Activated CD4-positive, alpha-beta T cell treated with anti-CD3 and anti-CD28 coated beads for 36 hours (primary cell): ENCODE measurements at regions of chr11 and their contacts with region 1.

Region 1: DNA sequence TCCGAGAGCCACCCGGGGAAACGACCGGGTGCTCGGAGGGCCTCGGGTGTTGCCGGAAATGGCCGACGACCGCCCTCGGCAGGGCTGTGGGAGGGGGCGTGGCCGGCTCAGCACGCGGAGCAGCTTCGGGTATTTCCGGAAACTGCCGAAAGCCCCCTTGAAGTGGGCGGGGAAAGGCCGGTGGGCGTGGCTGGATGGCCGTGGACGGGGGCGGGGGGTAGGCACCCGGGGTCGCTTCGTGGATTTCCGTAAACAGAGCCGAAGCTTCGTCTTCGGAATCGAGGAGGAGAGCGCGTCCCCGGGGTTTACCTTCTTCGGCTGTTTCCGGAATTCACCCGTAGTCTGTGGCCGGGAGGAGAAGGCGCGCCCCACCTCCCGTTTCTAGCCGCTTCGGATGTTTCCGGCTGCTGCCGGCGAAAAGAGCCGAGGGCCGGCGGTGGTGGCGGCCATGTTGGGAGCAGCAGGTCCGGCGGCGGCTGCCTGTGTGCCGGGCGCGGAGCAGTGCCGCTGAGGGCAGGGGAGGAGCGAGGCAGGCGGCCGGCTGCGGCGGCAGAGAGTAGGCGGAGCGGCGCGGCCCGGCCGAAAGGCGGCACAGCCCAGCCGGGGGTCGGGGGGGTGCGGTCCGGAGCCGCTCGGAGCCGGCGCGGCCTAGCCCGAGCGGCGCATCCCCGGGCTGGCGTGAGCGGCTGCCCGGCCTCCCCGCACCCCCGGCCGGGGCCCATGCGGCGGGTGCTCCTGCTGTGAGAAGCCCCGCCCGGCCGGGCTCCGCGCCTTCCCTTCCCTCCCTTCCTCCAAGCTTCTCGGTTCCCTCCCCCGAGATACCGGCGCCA is at the start of gene MARK2:
- DNase-seq: peak; percentile 100
- ATAC-seq: peak; percentile 90
- H3K4me3 Mint-ChIP-seq: peak within 1 kb of the TSS; percentile 97
- H3K27ac Mint-ChIP-seq: peak within 1 kb of the TSS; percentile 87
- H3K4me1 Mint-ChIP-seq: peaks cover 48% of the 10 kb centered on the region
- H3K27me3 Mint-ChIP-seq: no peaks in the 10 kb centered on the region
- total RNA-seq, gene MARK2: 24.3 to 24.9 TPM

Region 2: GRCh38 chr11:62652161-62653006 is 1186.5 kb before region 1 on chr11:
- CTCF ChIA-PET with region 1: no interaction called
- POLR2A ChIA-PET with region 1: no interaction called
- intact Hi-C with region 1: no loop called
- DNase-seq: no peak
- ATAC-seq: no peak
- H3K4me3 Mint-ChIP-seq: peak overlapping the region; percentile 88
- H3K27ac Mint-ChIP-seq: peak overlapping the region; percentile 91
- H3K4me1 Mint-ChIP-seq: peaks cover 23% of the 10 kb centered on the region
- H3K27me3 Mint-ChIP-seq: no peaks in the 10 kb centered on the region

Region 3: DNA sequence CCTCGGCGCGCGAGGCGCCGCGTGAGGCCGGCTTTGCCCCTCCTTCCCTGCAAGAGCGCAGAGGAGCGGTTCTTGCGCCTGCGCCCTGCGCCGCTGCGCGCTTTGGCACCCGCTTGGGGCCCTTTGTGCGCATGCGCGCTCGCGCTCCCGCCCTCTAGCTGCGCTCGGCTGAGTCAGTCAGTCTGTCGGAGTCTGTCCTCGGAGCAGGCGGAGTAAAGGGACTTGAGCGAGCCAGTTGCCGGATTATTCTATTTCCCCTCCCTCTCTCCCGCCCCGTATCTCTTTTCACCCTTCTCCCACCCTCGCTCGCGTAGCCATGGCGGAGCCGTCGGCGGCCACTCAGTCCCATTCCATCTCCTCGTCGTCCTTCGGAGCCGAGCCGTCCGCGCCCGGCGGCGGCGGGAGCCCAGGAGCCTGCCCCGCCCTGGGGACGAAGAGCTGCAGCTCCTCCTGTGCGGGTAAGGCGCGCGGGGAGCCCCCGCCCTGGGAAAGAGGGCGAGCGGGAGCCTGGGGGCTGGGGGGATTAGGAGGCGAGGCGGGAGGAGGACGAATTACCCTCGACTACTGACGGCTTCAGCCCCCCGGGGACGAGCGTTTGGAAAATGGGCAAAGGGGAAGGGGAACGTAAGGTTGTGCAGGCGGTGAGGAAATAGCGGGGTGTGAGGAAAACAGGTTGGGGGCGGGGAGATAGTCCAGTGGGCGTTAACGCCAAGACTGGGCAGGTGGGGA is 157.4 kb before region 1 on chr11 and contains the start of gene RTN3:
- CTCF ChIA-PET with region 1: interaction called, 4 read pairs
- POLR2A ChIA-PET with region 1: no interaction called
- intact Hi-C with region 1: loop called in 1 of 2 experiments (anchors 1 kb)
- DNase-seq: peak; percentile 99
- ATAC-seq: peak; percentile 94
- H3K4me3 Mint-ChIP-seq: peak within 1 kb of the TSS; percentile 90
- H3K27ac Mint-ChIP-seq: peak within 1 kb of the TSS; percentile 89
- H3K4me1 Mint-ChIP-seq: peaks cover 20% of the 10 kb centered on the region
- H3K27me3 Mint-ChIP-seq: no peaks in the 10 kb centered on the region
- total RNA-seq, gene RTN3: 42.2 to 43.0 TPM

Region 4: GRCh38 chr11:63710476-63711217 is 128.2 kb before region 1 on chr11:
- CTCF ChIA-PET with region 1: no interaction called
- POLR2A ChIA-PET with region 1: no interaction called
- intact Hi-C with region 1: no loop called
- DNase-seq: no peak
- ATAC-seq: no peak
- H3K4me3 Mint-ChIP-seq: no peak overlapping the region
- H3K27ac Mint-ChIP-seq: no peak overlapping the region
- H3K4me1 Mint-ChIP-seq: peaks cover 5% of the 10 kb centered on the region
- H3K27me3 Mint-ChIP-seq: no peaks in the 10 kb centered on the region

Region 5: DNA sequence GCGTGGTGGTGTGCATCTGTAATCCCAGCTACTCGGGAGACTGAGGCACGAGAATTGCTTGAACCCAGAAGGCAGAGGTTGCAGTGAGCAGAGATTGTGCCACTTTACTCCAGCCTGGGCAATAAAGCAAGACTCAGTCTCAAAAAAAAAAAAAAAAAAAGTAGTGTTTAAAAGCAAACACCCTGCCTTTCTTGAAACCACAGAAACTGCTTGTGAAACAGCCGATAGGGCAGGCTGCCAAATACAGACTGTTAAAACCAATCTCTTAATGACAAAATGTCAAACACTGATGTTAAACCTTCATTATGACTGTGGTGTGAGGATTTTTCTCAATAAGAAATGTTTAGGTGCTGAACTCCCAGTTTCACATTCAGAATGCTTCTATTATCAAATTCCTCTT is 27.3 kb after region 1 on chr11:
- CTCF ChIA-PET with region 1: interaction called, 8 read pairs
- POLR2A ChIA-PET with region 1: no interaction called
- intact Hi-C with region 1: loop called in 1 of 2 experiments (anchors 1 kb)
- DNase-seq: peak; percentile 92
- ATAC-seq: peak; percentile 81
- H3K4me3 Mint-ChIP-seq: peak overlapping the region; percentile 28
- H3K27ac Mint-ChIP-seq: peak overlapping the region; percentile 62
- H3K4me1 Mint-ChIP-seq: peaks cover 79% of the 10 kb centered on the region
- H3K27me3 Mint-ChIP-seq: no peaks in the 10 kb centered on the region

Region 6: DNA sequence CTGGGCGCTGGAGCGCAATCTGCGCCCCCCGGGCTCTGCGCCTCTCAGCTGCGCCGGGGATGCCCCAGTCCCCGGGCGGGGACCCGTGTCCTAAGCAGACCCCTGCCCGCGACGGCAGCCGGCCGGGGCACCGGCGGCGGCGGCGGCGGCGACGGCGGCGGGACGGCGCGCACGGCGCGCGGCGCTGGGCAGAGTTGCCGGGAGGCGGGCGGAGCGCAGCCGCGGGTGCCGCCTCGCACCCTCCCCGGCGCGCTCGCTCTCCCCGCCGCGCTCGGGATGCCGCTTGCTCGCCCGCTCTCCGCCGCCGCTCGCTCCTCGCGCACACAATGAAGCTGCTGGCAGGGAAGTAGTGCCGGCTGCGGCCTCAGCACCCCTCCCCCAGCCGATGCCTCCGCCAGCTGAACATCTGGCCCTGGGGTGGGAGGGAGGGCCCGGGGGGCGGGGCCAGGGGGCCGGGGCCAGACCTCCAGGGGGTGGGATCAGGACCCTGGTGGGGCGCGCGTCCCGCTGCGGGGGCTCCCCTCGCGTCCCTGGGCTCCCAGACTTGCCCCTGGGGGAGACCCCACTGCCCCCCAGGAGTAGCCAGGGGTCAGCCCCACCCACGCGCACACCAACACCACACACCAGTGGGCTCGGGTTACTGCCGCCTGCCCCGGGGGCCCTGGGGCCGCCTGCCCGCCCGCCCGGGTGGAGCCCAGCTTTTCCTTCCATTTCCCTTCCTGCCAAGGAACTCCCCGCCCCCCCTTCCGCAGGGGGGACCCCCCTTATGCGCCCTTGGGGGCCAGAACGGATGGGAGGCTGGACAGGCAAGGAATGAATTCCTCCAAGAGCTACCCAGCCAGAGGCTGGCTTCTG is 78.2 kb after region 1 on chr11 and contains the start of gene RCOR2:
- CTCF ChIA-PET with region 1: interaction called, 7 read pairs
- POLR2A ChIA-PET with region 1: interaction called, 4 read pairs
- intact Hi-C with region 1: loop called in 1 of 2 experiments (anchors 1 kb)
- DNase-seq: peak; percentile 81
- ATAC-seq: peak; percentile 68
- H3K4me3 Mint-ChIP-seq: peak within 1 kb of the TSS; percentile 70
- H3K27ac Mint-ChIP-seq: no peak within 1 kb of the TSS
- H3K4me1 Mint-ChIP-seq: peaks cover 12% of the 10 kb centered on the region
- H3K27me3 Mint-ChIP-seq: peaks cover 3% of the 10 kb centered on the region
- total RNA-seq, gene RCOR2: 0.37 TPM

Region 7: DNA sequence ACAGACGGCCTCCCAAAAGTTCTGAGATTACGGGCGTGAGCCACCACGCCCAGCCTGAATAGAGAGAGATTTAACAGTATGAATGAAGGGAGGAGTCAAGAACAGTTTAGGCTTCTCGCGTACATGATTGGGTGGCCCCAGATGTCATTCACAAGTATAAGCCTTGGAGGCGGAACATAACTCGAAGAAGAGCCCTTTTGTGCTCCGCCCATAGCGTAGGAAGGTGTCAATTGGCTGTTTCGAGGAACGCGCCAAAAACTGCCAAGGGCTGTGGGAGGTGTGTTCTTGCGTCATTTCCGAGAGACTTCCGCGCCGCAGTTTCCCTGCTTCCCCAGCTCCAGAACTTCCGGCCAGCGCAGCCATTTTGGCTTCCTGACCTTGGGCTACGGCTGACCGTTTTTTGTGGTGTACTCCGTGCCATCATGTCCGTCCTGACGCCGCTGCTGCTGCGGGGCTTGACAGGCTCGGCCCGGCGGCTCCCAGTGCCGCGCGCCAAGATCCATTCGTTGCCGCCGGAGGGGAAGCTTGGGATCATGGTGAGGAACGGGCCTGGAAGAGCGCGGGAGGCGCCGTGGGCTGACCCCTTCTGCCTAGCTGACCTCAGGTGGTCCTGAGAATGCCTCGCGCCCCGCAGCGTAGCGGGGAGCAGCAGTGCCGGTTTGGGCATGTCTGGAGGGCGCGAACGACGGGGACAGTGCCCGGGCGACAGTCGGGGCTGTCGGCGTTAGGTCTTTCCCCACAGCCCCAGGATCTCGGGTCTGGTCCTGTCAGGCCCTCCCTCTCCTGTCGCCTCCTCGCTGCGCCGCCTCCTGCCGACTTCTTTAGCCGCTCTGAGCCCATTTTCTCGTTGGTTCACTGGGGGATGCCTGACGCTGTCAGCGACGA is 135.6 kb after region 1 on chr11 and contains the start of gene COX8A:
- CTCF ChIA-PET with region 1: interaction called, 4 read pairs
- POLR2A ChIA-PET with region 1: interaction called, 6 read pairs
- intact Hi-C with region 1: loop called in 1 of 2 experiments (anchors 1 kb)
- DNase-seq: peak; percentile 97
- ATAC-seq: peak; percentile 100
- H3K4me3 Mint-ChIP-seq: peak within 1 kb of the TSS; percentile 95
- H3K27ac Mint-ChIP-seq: peak within 1 kb of the TSS; percentile 97
- H3K4me1 Mint-ChIP-seq: peaks cover 20% of the 10 kb centered on the region
- H3K27me3 Mint-ChIP-seq: no peaks in the 10 kb centered on the region
- total RNA-seq, gene COX8A: 413 to 454 TPM

Region 8: DNA sequence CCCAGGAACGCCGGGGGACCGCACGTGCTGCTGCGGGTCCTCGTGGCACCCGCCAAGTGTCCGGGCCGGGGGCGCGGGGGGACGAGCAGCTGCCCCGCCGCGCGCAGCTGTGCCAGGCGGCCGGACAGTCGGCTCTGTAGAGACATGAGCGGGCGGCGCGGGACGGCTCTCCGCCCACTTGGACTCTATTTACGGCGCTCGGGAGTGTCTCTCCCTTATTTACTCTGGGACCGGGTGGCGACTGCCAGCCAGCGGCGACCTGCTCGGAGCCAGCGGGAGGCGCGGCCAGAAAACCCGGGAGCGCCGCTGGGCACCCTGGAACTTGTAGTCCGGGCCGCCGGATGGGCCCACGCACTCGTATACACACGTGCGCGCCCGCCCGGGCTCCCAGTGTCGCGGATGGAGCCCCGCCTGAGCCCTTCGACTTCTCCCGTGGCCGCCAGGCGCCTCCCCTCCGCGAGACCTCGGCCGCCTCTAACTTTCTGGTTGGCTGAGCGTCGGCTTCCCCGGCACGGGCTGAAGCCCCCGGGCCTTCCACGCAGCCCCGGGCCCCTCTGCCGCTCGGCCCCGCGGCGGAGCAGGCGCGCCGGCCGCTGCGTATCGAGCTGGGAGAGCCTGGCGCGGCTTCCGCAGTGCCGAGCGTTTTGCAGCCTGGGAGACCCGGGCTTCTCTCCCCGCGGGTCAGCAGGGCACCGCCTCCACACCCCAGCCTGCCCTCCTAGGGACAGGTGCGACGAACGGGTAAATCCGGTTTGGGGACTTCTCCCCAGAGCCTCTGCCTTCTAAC is 327.1 kb after region 1 on chr11 and contains the start of gene MACROD1:
- CTCF ChIA-PET with region 1: no interaction called
- POLR2A ChIA-PET with region 1: no interaction called
- intact Hi-C with region 1: loop called in 1 of 2 experiments (anchors 5 kb)
- DNase-seq: peak; percentile 92
- ATAC-seq: peak; percentile 94
- H3K4me3 Mint-ChIP-seq: peak within 1 kb of the TSS; percentile 92
- H3K27ac Mint-ChIP-seq: peak within 1 kb of the TSS; percentile 83
- H3K4me1 Mint-ChIP-seq: peaks cover 9% of the 10 kb centered on the region
- H3K27me3 Mint-ChIP-seq: no peaks in the 10 kb centered on the region
- total RNA-seq, gene MACROD1: 26.4 to 28.6 TPM

Region 9: DNA sequence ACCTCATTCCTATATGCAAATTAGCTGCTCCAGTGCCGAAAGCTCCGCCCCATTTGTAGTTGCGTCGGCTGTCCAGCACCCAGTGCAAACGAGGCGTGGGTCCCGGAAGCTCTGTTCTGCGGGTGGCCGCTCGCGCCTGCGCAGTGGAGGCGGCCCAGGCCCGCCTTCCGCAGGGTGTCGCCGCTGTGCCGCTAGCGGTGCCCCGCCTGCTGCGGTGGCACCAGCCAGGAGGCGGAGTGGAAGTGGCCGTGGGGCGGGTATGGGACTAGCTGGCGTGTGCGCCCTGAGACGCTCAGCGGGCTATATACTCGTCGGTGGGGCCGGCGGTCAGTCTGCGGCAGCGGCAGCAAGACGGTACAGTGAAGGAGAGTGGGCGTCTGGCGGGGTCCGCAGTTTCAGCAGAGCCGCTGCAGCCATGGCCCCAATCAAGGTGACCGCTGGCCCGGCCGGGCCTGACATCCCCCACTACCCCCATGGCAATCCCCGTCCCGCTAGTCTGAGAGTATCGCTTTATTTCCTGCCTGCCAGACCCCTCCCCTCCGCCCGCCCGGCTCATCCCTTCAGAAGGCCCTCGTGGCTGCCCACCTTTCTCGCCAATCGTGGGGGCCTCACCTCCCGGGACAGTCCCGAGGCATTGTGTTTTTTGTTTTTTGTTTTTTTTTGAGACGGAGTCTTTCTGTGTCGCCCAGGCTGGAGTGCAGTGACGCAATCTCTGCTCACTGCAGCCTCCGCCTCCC is 479.2 kb after region 1 on chr11 and contains the start of gene PRDX5:
- CTCF ChIA-PET with region 1: no interaction called
- POLR2A ChIA-PET with region 1: no interaction called
- intact Hi-C with region 1: loop called in 1 of 2 experiments (anchors 2 kb)
- DNase-seq: peak; percentile 97
- ATAC-seq: peak; percentile 84
- H3K4me3 Mint-ChIP-seq: peak within 1 kb of the TSS; percentile 97
- H3K27ac Mint-ChIP-seq: peak within 1 kb of the TSS; percentile 99
- H3K4me1 Mint-ChIP-seq: peaks cover 26% of the 10 kb centered on the region
- H3K27me3 Mint-ChIP-seq: no peaks in the 10 kb centered on the region
- total RNA-seq, gene PRDX5: 110 to 142 TPM